ENCODE measurements at regions of chr3 and their contacts with region 1.

Region 1: GRCh38 chr3:124576565-124577493 is 153.4 kb upstream of the UMPS start:
- DNase-seq: no peak
- ATAC-seq: peak; percentile 20 to 82 (median 66)
- H3K4me3 ChIP-seq: no peak overlapping the region
- H3K27ac ChIP-seq: peak overlapping the region in 2 of 10 donors; percentile 3 to 17
- H3K4me1 ChIP-seq: peaks cover 0 to 13% (median 8%) of the 10 kb centered on the region in 9 donors
- H3K27me3 ChIP-seq: no peaks in the 10 kb centered on the region
- CTCF ChIP-seq: peak in 5 of 9 donors; percentile 7 to 40 (median 34)

Region 2: GRCh38 chr3:124611520-124611919 is 34.7 kb after region 1 on chr3:
- intact Hi-C with region 1: loop called in 1 of 10 experiments (anchors 5 kb)
- DNase-seq: no peak
- ATAC-seq: peak in 1 of 8 donors; percentile 39
- H3K4me3 ChIP-seq: no peak overlapping the region
- H3K27ac ChIP-seq: peak overlapping the region in 1 of 10 donors; percentile 53
- H3K4me1 ChIP-seq: peaks cover 0 to 79% (median 21%) of the 10 kb centered on the region in 9 donors
- H3K27me3 ChIP-seq: no peaks in the 10 kb centered on the region
- CTCF ChIP-seq: no peak

Region 3: DNA sequence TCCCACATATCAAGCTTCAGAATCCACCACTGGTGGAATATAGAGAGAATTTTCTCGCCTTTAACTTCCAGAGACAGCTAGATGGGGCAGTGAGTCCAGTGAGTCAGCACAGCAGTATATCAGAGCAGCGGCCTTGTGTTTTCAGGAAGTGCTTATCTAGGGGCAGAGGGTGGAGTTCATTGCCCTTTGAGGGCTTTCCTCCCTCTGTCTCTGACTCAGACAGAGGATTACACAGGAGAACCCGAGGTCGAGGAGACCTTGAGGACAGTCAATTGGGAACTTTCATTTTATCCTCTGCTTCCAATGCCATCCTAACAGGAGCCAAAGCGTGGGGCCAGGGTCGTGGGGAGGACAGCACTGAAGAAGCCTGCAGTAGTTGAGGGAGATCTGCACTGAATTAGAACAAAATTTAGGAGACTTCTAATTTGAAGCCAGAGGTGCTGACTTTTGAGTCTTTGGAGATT is 43.8 kb after region 1 on chr3:
- intact Hi-C with region 1: loop called in 1 of 10 experiments (anchors 2 kb)
- DNase-seq: peak in 1 of 2 donors; percentile 40
- ATAC-seq: peak; percentile 40 to 90 (median 72)
- H3K4me3 ChIP-seq: peak overlapping the region in 1 of 10 donors; percentile 1
- H3K27ac ChIP-seq: peak overlapping the region in 9 of 10 donors; percentile 50 to 82 (median 69)
- H3K4me1 ChIP-seq: peaks cover 0 to 45% (median 28%) of the 10 kb centered on the region in 9 donors
- H3K27me3 ChIP-seq: no peaks in the 10 kb centered on the region
- CTCF ChIP-seq: peak in 4 of 9 donors; percentile 23 to 43 (median 32)

Region 4: GRCh38 chr3:124826703-124827102 is 249.9 kb after region 1 on chr3:
- intact Hi-C with region 1: no loop called
- DNase-seq: no peak
- ATAC-seq: no peak
- H3K4me3 ChIP-seq: no peak overlapping the region
- H3K27ac ChIP-seq: peak overlapping the region in 2 of 10 donors; percentile 3 to 59
- H3K4me1 ChIP-seq: peaks cover 7 to 45% (median 36%) of the 10 kb centered on the region in 9 donors
- H3K27me3 ChIP-seq: no peaks in the 10 kb centered on the region
- CTCF ChIP-seq: no peak